Naive thymus-derived CD4-positive, alpha-beta T cell (primary cell): ENCODE measurements at regions of chr9 and their contacts with region 1.

Region 1: DNA sequence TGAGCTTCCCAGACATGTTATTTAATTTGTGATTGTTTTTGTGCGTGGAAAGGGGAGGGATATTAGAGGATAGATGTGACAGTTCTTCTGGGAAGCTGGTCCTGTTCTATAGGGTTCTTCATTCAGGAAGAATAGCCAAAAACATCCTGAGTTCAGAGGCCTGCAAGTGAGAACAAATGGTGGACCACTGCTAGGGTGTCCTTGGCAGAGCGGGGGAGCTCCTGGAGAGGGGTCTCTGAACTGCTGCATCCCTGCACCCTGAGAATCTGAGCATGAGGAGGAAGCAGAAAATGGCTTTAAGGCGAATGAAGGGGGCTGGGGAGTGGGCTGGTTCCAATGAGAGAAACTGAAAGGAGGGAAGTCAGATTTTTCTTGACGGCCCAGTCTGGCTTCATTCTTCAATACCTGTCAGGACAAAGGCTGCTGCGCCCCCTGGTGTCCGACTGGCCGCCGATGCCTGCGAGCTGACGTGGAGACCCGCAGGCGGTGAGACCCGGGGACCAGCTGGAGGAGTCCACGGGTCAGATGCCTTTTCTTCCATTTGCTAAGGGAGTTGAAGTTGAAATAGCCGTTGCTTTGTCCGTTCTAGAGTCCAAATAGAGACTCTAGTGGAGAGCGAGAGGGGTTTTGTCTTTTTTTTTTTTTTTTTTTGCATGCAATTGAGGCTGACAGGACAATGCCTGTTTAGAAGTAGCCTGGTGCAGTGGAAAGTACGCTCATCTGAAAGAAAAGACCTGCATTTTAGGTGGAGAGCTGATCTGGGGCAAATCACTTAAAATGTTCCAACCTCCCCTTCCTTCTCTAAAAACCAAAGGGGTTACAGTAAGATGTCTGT is 39.5 kb upstream of the NFIB start:
- DNase-seq: peak; percentile 3 to 81 (median 27)
- ATAC-seq: peak; percentile 49
- H3K4me3 ChIP-seq: no peak overlapping the region
- H3K4me3 Mint-ChIP-seq: peak overlapping the region in 1 of 10 donors; percentile 26
- H3K27ac ChIP-seq: no peak overlapping the region
- H3K27ac Mint-ChIP-seq: no peak overlapping the region
- H3K4me1 ChIP-seq: no peaks in the 10 kb centered on the region
- H3K4me1 Mint-ChIP-seq: peaks cover 4 to 16% (median 7%) of the 10 kb centered on the region in 7 donors
- H3K27me3 ChIP-seq: peaks cover 0 to 2% of the 10 kb centered on the region in 2 donors
- H3K27me3 Mint-ChIP-seq: peaks cover 56 to 83% (median 69%) of the 10 kb centered on the region in 5 donors

Region 2: GRCh38 chr9:13033959-13034693 is 1319.3 kb before region 1 on chr9:
- CTCF ChIA-PET with region 1: no interaction called
- POLR2A ChIA-PET with region 1: no interaction called
- intact Hi-C with region 1: loop called in 1 of 2 experiments (anchors 10 kb)
- DNase-seq: peak in 1 of 9 donors; percentile 20
- ATAC-seq: no peak
- H3K4me3 ChIP-seq: no peak overlapping the region
- H3K4me3 Mint-ChIP-seq: no peak overlapping the region
- H3K27ac ChIP-seq: no peak overlapping the region
- H3K27ac Mint-ChIP-seq: no peak overlapping the region
- H3K4me1 ChIP-seq: no peaks in the 10 kb centered on the region
- H3K4me1 Mint-ChIP-seq: peaks cover 0 to 2% (median 0%) of the 10 kb centered on the region in 7 donors
- H3K27me3 ChIP-seq: no peaks in the 10 kb centered on the region
- H3K27me3 Mint-ChIP-seq: peaks cover 0 to 4% (median 0%) of the 10 kb centered on the region in 5 donors

Region 3: DNA sequence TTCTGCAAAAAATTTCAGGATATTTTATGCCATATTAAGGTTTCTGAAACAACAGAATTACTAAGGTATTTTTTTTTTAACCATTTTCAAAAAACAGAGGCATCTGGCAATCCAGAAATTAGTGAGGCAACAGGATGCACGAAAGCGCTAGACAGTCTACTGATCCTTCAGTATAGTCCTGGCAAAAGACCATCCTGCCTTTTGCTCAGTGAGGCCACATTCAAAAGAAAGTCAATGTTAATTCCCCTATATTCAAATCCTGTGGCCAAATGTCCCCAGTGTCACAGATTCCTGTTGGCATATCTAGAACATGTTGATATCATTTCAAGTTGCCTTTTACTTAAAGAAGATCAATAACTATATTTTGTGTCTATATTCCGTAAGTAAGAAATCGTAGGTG is 26.4 kb before region 1 on chr9:
- CTCF ChIA-PET with region 1: no interaction called
- POLR2A ChIA-PET with region 1: no interaction called
- intact Hi-C with region 1: no loop called
- DNase-seq: no peak
- ATAC-seq: no peak
- H3K4me3 ChIP-seq: no peak overlapping the region
- H3K4me3 Mint-ChIP-seq: no peak overlapping the region
- H3K27ac ChIP-seq: no peak overlapping the region
- H3K27ac Mint-ChIP-seq: no peak overlapping the region
- H3K4me1 ChIP-seq: no peaks in the 10 kb centered on the region
- H3K4me1 Mint-ChIP-seq: peaks cover 6 to 10% (median 8%) of the 10 kb centered on the region in 7 donors
- H3K27me3 ChIP-seq: peaks cover 0 to 8% of the 10 kb centered on the region in 2 donors
- H3K27me3 Mint-ChIP-seq: peaks cover 17 to 52% (median 41%) of the 10 kb centered on the region in 5 donors

Region 4: DNA sequence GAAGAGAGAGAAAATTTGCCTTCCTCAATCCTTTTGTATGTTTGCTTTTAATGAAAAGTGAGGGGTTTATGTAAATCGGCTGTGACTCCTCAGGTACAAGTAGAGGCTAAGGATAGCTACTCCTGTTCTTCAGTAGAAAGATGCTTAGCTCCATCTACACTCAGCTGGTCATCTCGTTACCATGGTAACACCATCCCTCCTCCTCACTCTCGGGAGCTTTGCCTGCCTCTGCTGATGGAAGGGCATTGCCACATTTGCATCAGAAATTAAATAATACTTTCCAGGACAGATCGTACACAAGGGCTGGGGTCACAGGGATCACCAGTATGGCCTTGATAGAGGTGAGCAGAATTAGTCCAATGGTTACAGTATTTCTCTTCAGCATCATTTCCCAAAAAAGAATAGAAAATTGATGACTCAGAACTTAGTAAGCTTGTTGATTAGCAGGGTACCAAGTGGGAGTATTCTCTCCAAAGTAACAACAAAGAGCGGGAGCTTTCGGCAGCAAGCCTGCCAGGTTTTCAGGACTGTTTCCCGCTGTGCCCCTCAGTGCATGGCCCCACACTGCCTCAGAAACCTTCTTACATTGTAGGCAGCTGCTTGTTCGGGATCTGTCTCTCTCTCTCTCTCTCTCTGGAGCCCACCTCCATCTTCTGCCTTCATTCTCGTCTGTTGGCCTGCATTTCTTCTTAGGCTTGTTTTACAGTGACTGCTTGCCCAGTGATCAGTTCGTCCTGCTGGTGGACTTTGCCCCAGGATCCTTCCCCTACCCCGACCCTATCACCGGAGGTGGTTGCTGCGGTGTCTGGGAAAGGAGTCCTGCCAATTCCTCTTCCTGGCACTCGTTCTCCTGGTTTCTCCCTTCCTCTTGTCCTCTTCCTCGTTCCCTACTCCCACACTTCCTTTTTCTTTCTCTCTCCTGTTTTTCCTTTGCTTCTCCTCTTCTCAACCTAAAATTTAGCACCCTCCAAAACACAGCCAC is 1017.3 kb after region 1 on chr9:
- CTCF ChIA-PET with region 1: no interaction called
- POLR2A ChIA-PET with region 1: no interaction called
- intact Hi-C with region 1: no loop called
- DNase-seq: no peak
- ATAC-seq: no peak
- H3K4me3 ChIP-seq: no peak overlapping the region
- H3K4me3 Mint-ChIP-seq: no peak overlapping the region
- H3K27ac ChIP-seq: no peak overlapping the region
- H3K27ac Mint-ChIP-seq: no peak overlapping the region
- H3K4me1 ChIP-seq: no peaks in the 10 kb centered on the region
- H3K4me1 Mint-ChIP-seq: peaks cover 0 to 7% (median 0%) of the 10 kb centered on the region in 7 donors
- H3K27me3 ChIP-seq: no peaks in the 10 kb centered on the region
- H3K27me3 Mint-ChIP-seq: peaks cover 0 to 7% (median 0%) of the 10 kb centered on the region in 5 donors

Region 5: GRCh38 chr9:15501179-15501578 is 1147.7 kb after region 1 on chr9:
- CTCF ChIA-PET with region 1: no interaction called
- POLR2A ChIA-PET with region 1: no interaction called
- intact Hi-C with region 1: no loop called
- DNase-seq: peak in 1 of 9 donors; percentile 27
- ATAC-seq: no peak
- H3K4me3 ChIP-seq: no peak overlapping the region
- H3K4me3 Mint-ChIP-seq: peak overlapping the region in 8 of 10 donors; percentile 19 to 66 (median 52)
- H3K27ac ChIP-seq: no peak overlapping the region
- H3K27ac Mint-ChIP-seq: peak overlapping the region; percentile 11 to 92 (median 60)
- H3K4me1 ChIP-seq: peaks cover 8 to 28% of the 10 kb centered on the region in 2 donors
- H3K4me1 Mint-ChIP-seq: peaks cover 35 to 87% (median 70%) of the 10 kb centered on the region in 7 donors
- H3K27me3 ChIP-seq: no peaks in the 10 kb centered on the region
- H3K27me3 Mint-ChIP-seq: no peaks in the 10 kb centered on the region